Activated naive CD8-positive, alpha-beta T cell treated with anti-CD3 and anti-CD28 coated beads, Interleukin-2, amount 10 ng/mL, durations not matched to agents 7 days and 5 days (primary cell): ENCODE measurements at regions of chr20 and their contacts with region 1.

Region 1: DNA sequence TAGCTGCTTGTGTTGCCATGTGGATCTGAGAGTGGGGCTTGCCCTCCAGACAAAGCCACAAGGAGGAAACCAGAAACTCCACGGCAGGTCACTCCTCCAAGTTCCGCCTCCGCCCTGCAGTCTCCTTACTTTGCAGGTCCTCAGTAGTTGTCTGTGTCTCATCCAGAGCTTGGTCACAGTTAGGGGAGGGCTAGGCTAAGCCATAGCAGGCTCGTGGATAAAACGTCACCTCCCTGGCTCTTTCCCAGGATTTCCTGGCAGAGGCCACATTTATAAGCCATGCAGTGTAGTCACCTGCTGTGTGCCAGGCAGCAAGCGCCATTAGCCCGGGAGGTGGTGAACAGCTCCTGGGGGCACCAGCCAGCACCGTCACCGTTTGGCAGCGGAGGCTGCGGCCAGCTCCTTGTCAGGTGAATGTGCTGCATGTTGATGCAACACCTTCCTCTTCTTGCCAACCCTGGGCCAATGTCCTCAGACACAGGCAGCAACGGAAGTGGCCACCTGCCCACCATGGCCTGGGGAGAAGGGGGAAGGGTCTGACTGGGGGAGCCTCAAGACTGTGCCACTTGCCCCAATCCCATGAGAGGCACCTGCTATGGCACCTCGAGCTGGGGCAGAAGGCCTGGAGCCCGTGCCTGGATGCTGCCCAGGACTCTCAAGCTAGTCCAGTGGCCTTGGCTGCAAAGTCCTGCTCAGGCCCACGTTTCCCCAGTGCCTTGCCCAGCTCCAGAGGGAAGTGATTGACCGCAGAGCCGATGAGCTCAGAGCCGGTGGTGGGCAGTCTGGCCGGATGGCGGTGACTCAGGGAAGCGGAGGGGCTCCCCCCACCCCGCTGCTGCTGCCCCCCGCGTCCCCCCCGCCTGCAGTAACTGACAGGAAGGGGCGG is 39.0 kb upstream of the SLCO4A1 start:
- DNase-seq: peak; percentile 76
- ATAC-seq: peak; percentile 79
- H3K4me3 Mint-ChIP-seq: peak overlapping the region; percentile 86
- H3K27ac Mint-ChIP-seq: peak overlapping the region; percentile 95
- H3K4me1 Mint-ChIP-seq: peaks cover 15% of the 10 kb centered on the region
- H3K27me3 Mint-ChIP-seq: peaks cover 34% of the 10 kb centered on the region

Region 2: DNA sequence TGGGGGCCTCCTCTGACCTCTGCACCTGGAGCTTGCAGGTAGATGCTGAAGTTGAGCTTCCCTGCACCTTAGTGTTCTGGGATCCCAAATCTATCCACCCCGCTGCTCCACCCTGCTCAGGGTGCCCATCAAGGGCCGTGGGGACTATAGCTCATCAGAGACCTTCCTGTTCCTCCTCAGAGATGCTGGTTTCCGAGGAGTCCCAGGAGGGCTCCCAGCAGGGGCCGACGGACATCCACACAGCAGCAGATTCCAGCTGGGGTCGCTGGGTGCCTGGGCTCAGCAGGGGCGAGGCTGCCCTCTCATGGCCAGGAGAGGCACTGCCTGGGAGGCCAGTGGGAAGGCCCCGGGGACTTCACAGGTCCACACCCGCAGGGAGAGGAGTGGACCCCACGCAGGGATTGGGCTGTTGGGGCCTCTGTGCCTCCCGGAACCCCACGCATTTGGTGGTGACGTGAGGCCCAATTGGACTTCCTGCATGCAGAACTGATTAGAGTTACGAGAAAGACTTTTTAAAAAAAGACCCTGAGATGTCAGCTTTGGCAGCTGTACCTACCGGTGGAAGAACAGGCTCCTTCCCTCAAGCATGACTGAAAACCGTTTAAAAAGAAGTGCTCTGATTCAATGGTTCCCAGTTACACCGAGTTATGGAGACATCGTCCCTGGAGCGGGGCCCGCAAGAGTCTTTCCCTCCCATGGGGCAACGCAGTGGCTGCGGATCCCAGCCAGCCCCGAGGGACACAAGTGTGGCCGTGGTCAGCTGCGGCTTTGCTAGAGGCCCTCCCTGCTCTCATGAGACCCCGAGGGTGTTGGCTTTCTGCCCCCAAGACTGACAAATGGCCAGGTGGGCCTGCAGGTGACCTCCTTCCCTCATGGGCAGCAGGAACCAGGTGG is 13.7 kb after region 1 on chr20:
- POLR2A ChIA-PET with region 1: interaction called, 38 read pairs
- DNase-seq: peak; percentile 85
- ATAC-seq: peak; percentile 48
- H3K4me3 Mint-ChIP-seq: peak overlapping the region; percentile 63
- H3K27ac Mint-ChIP-seq: peak overlapping the region; percentile 98
- H3K4me1 Mint-ChIP-seq: peaks cover 35% of the 10 kb centered on the region
- H3K27me3 Mint-ChIP-seq: peaks cover 7% of the 10 kb centered on the region

Region 3: DNA sequence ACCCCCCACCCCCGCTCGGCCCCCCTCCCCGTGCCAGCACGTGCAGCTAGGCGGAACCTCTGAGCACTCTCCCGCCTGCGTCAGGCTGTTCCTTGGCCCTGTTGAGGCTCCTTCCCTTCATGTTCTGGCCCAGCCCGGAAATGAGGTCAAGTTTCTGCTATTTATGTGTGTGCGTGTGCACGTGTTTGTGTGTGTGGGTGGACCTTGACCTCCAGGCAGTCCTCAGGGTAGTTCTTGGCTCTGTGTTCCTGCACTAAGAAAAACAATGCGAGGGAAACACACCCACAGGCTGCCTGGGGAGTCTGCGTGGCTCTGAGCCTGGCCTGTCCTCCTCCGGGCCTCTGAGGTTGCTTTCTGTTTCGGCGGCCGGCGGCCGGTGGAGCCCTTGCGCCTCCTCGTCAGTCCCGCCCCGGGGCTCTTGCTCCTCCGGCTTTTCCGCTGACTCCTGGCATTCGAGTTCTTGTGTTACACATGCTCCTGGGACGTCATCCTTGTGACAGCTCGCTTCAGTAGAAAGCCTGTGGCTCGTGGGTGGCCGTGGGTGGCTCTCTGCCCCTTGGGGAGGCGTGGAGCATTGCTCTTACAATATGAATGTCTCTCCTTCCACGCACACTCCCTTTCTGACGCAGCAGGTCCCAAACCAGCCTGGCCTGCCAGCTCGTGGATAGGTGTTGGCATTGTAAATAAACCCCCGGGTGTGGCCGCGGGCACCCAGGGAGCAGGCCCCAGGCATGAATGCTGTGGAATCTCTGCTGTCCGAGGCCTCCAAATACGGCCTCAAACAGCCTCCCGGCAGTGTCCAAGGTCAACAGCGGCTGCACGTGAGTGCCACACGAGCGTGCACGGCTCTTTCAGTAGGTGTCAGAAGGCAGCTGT is 49.0 kb after region 1 on chr20:
- POLR2A ChIA-PET with region 1: interaction called, 16 read pairs
- DNase-seq: peak; percentile 74
- ATAC-seq: peak; percentile 65
- H3K4me3 Mint-ChIP-seq: peak overlapping the region; percentile 84
- H3K27ac Mint-ChIP-seq: peak overlapping the region; percentile 98
- H3K4me1 Mint-ChIP-seq: peaks cover 42% of the 10 kb centered on the region
- H3K27me3 Mint-ChIP-seq: no peaks in the 10 kb centered on the region